ENCODE measurements at regions of chr4 and their contacts with region 1.

Region 1: GRCh38 chr4:10116580-10117358 is at the start of gene WDR1:
- DNase-seq: peak; percentile 93 to 97
- ATAC-seq: peak; percentile 87 to 91
- H3K4me3 ChIP-seq: peak within 1 kb of the TSS; percentile 65 to 82 (median 75)
- H3K27ac ChIP-seq: peak within 1 kb of the TSS; percentile 93 to 99 (median 97)
- H3K4me1 ChIP-seq: peaks cover 46 to 48% of the 10 kb centered on the region in 2 donors
- H3K27me3 ChIP-seq: no peaks in the 10 kb centered on the region
- CTCF ChIP-seq: no peak
- POLR2A ChIP-seq: peak; percentile 98
- total RNA-seq, gene WDR1: 57.3 to 84.2 (median 72.7) TPM

Region 2: GRCh38 chr4:9691238-9692065 is 425.3 kb before region 1 on chr4:
- in situ Hi-C with region 1: no loop called
- intact Hi-C with region 1: loop called (anchors 2 kb)
- DNase-seq: peak; percentile 91 to 93
- ATAC-seq: peak; percentile 98 to 99
- H3K4me3 ChIP-seq: peak overlapping the region; percentile 60 to 81 (median 68)
- H3K27ac ChIP-seq: peak overlapping the region; percentile 73 to 85 (median 77)
- H3K4me1 ChIP-seq: peaks cover 0 to 3% of the 10 kb centered on the region in 2 donors
- H3K27me3 ChIP-seq: no peaks in the 10 kb centered on the region
- CTCF ChIP-seq: no peak
- POLR2A ChIP-seq: no peak

Region 3: DNA sequence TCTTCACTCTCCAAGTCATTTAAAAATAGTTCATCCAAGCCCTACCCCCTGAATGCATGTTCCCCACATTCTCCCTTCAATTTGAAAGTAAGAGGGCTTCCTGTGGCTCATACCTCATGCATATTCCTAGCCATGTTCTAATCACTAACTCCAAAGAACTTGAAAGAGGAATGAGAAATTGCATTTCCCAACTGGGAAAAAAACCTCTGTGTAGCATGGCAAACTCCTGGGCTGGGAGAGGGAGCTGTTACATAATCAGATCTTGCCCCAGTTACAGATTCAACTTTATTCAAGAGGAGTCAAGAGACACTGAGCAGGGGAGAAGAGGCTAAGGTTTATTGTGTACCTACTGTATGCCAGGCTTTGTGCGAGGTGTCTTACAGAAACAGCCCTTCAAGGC is 185.6 kb before region 1 on chr4:
- in situ Hi-C with region 1: no loop called
- intact Hi-C with region 1: no loop called
- DNase-seq: no peak
- ATAC-seq: no peak
- H3K4me3 ChIP-seq: no peak overlapping the region
- H3K27ac ChIP-seq: no peak overlapping the region
- H3K4me1 ChIP-seq: no peaks in the 10 kb centered on the region
- H3K27me3 ChIP-seq: no peaks in the 10 kb centered on the region
- CTCF ChIP-seq: no peak
- POLR2A ChIP-seq: no peak

Region 4: DNA sequence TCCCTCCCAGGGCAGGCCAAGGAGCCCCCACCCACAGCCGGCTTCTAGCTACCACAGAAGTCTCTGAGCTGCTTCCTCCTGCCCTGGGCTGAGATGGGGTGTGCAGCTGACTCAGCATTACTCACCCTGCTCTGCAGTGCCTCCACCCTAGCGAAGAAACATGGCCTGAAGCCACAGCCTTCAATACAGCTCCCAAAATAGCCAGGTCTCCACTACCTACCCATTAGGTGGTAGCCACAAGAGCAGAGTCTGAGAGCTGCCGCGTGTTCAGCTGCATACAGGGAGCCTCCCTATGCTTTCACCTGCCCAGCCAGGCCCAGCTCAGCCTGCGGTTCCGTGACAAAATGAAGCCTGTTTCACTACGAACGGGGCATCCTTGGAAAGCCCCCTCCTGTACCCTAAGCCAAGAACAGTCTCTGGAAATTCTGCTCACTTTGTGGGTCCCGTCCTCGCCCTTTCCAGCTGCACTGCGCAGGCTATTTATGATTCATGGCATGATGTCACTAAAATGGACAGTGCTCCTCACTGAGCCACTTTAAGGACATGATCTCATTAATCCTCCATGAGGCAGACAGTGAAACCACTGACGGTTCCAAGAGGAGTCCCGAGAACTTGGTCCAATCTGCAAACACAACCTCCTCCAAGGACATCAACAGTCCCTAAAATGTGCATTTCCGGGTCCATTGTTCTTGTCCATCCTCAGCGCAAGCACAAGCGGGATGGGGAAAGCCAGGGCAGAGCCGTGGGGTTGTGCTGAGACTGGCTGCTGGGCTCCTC is 20.4 kb before region 1 on chr4:
- in situ Hi-C with region 1: no loop called
- intact Hi-C with region 1: loop called (anchors 2 kb)
- DNase-seq: peak; percentile 62 to 89
- ATAC-seq: peak; percentile 78 to 93
- H3K4me3 ChIP-seq: no peak overlapping the region
- H3K27ac ChIP-seq: peak overlapping the region; percentile 92 to 99 (median 95)
- H3K4me1 ChIP-seq: peaks cover 98 to 100% of the 10 kb centered on the region in 2 donors
- H3K27me3 ChIP-seq: no peaks in the 10 kb centered on the region
- CTCF ChIP-seq: no peak
- POLR2A ChIP-seq: peak in 1 of 2 donors; percentile 58

Region 5: GRCh38 chr4:10173037-10173753 is 56.4 kb after region 1 on chr4:
- in situ Hi-C with region 1: no loop called
- intact Hi-C with region 1: loop called (anchors 2 kb)
- DNase-seq: peak; percentile 43 to 70
- ATAC-seq: peak; percentile 76 to 78
- H3K4me3 ChIP-seq: peak overlapping the region in 1 of 4 donors; percentile 10
- H3K27ac ChIP-seq: peak overlapping the region; percentile 63 to 77 (median 70)
- H3K4me1 ChIP-seq: peaks cover 25 to 31% of the 10 kb centered on the region in 2 donors
- H3K27me3 ChIP-seq: no peaks in the 10 kb centered on the region
- CTCF ChIP-seq: peak in 2 of 5 experiments; percentile 9 to 18
- POLR2A ChIP-seq: no peak

Measured in gastrocnemius medialis (tissue), 4 donors.